PC-3 (cell line): ENCODE measurements at regions of chr14 and their contacts with region 1.

Region 1: DNA sequence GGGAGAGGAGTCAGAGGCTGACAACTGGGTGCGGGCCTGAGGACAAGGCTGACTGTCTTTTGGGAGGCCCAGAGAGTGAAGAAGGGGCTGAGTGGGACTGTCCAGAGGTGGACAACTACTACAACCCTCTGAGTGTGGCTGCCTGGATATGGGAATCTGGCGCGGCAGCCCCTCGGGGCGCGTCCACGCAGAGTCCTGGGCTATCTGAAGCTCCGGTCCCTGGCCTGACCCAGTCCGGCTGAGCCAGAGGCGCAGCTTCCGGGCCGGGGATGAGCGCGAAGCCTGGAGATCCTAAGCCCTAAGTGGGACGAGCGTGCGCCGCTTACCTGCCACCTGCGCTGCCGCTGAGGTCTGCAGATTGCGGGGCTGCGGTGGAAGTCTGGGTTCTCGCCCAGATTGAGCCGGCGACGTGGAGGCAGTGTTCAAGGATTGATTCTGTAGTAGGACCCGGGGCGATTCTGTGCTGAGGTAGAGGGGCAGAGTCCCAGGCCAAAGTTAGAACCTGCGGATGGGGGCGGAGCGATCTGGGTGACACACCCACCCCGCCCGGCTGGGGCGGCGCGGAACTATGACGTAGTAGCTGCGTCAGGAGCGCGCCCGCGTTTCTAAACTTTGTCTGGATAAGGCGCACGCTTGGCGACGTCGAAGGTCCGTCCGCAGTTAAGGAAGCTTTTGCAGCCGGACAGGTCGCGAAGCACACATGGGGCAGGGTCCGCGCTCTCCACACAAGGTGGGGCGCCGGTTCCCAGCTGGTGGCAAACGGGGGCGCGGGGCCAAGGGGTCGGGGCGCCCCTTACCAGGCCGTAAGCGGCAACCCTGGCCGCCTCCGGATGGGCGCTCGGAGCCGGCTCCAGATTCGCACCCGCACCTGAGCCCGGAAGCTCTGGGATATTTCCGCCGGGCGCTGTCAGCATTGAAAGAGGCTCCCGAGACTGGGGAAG is at the starts of genes DHRS1 and NOP9:
- DNase-seq: peak; percentile 95
- ATAC-seq: peak; percentile 65
- H3K4me3 ChIP-seq: peak within 1 kb of the TSS; percentile 93
- H3K27ac ChIP-seq: peak within 1 kb of the TSS; percentile 71
- H3K4me1 ChIP-seq: peaks cover 36% of the 10 kb centered on the region
- H3K27me3 ChIP-seq: no peaks in the 10 kb centered on the region
- CTCF ChIP-seq: no peak
- total RNA-seq, gene DHRS1: 15.8 and 15.9 TPM in 2 replicates
- total RNA-seq, gene NOP9: 30.4 and 35.5 TPM in 2 replicates

Region 2: DNA sequence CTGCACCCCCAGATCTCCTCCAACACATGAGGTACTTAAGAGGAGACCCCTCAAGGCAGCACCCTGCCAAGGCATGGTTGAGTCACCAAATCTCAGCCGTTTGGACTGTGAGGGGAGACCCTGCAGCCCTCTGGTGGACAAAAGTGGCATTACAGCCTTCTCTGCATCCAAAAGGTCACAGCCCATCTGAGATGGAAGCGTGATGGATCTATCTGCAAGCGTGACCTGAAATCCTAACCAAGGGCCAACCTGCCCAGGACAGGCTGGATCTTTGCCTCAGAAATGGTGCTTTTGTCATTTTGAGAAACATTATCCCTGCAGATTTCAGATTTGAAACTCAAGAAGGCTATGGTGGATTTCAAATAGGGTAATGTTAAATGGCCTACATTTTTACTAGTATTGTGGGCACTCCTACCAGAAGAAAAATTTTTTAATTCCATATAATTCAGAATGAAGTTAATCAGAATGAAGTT is 369.7 kb before region 1 on chr14:
- CTCF ChIA-PET with region 1: no interaction called
- POLR2A ChIA-PET with region 1: no interaction called
- intact Hi-C with region 1: no loop called
- DNase-seq: peak; percentile 86
- ATAC-seq: peak; percentile 85
- H3K4me3 ChIP-seq: no peak overlapping the region
- H3K27ac ChIP-seq: no peak overlapping the region
- H3K4me1 ChIP-seq: no peaks in the 10 kb centered on the region
- H3K27me3 ChIP-seq: no peaks in the 10 kb centered on the region
- CTCF ChIP-seq: peak; percentile 96

Region 3: GRCh38 chr14:24271134-24271833 is 28.2 kb before region 1 on chr14 and contains the start of gene RABGGTA:
- CTCF ChIA-PET with region 1: interaction called, 5 read pairs
- POLR2A ChIA-PET with region 1: no interaction called
- intact Hi-C with region 1: loop called (anchors 2 kb)
- DNase-seq: peak; percentile 91
- ATAC-seq: peak; percentile 97
- H3K4me3 ChIP-seq: peak within 1 kb of the TSS; percentile 99
- H3K27ac ChIP-seq: peak within 1 kb of the TSS; percentile 76
- H3K4me1 ChIP-seq: peaks cover 21% of the 10 kb centered on the region
- H3K27me3 ChIP-seq: no peaks in the 10 kb centered on the region
- CTCF ChIP-seq: peak; percentile 77
- total RNA-seq, gene RABGGTA: 39.2 and 51.5 TPM in 2 replicates

Region 4: DNA sequence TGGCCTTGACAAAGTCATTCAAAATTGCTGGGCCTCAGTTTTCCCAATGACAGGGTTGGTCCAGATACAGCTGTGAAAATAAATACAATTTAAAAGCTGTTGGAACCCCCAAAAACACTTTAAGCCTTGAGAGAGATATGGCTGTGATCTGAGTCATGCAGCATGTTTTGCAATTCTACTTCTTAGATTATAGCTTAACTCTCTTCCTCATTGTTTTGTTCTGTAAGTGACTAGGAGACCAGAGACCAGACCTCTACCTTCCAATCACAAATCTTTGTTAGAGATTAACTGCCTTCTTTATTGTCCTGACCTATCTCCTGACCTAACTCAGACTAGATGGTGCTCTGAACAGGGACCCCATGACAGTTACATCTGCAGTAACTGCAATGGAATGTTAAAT is 552.3 kb after region 1 on chr14:
- CTCF ChIA-PET with region 1: no interaction called
- POLR2A ChIA-PET with region 1: no interaction called
- intact Hi-C with region 1: no loop called
- DNase-seq: no peak
- ATAC-seq: no peak
- H3K4me3 ChIP-seq: no peak overlapping the region
- H3K27ac ChIP-seq: no peak overlapping the region
- H3K4me1 ChIP-seq: no peaks in the 10 kb centered on the region
- H3K27me3 ChIP-seq: peaks cover 11% of the 10 kb centered on the region; the same call in 1 of the 2 replicates
- CTCF ChIP-seq: no peak